ENCODE measurements at regions of chr21 and their contacts with region 1.

Region 1: DNA sequence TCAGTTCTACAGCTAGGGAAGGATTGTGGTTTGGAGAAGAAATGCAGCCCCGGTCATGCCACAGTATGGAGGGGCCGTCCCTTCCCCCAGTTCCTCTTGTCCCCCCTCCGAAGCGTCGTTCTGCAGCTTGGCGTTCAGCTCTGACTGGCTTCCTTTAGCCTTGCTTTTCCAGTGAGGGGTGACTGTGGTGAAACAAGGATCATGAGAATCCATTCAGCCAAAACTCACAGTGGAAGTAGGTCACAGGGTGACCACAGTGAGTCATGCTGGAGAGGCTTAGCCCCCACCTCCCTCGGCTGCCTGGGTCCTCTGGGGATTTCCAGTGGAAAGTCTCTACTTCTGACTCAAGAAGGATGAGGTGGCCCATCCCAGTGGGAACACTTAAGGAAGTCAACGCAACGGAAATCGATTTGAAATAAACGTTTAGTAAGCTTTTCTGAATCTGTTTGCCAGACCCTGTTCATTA is 37.3 kb upstream of the COL6A2 start:
- DNase-seq: peak; percentile 99
- H3K4me3 ChIP-seq: no peak overlapping the region
- H3K27ac ChIP-seq: peak overlapping the region; percentile 98
- H3K27me3 ChIP-seq: no peaks in the 10 kb centered on the region
- CTCF ChIP-seq: no peak

Region 2: DNA sequence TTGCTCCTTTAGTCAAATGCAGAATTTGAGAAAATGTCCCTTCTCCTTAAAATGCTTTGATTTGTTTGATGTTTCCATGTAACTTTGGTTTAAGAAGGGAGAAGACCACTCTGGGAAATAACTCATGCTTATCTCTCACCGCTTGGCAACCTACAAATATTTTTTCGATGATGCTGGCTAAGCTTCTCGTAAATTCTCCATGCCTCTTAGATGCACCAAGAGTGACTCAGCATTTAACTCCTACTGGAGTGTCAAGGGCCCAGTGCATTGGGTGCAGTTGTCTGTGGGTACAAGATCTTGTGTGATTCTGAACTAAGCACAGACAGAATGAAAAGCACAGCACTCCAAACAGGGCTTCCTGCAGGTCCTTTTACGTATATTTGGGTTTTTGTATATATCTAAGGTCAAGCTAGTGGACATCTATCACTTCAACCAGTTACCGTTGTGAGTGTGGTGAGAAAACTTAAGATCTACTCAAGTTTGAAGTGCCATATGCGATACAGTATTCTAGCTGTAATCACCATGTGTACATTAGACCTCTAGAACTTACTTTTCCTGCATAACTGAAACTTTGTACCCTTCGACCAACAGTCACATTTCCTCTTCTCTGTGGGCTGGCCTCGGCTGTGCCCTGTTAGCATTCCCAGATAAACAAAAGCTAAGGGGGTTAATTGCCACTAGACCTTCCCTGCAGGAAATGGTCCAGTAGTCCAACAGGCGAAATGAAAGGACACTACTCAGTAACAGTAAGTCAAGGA is 599.8 kb before region 1 on chr21:
- in situ Hi-C with region 1: no loop called
- DNase-seq: peak; percentile 90
- H3K4me3 ChIP-seq: no peak overlapping the region
- H3K27ac ChIP-seq: peak overlapping the region; percentile 77
- H3K27me3 ChIP-seq: no peaks in the 10 kb centered on the region
- CTCF ChIP-seq: no peak

Region 3: GRCh38 chr21:46002841-46003574 is 57.6 kb before region 1 on chr21:
- in situ Hi-C with region 1: no loop called
- DNase-seq: no peak
- H3K4me3 ChIP-seq: no peak overlapping the region
- H3K27ac ChIP-seq: no peak overlapping the region
- H3K27me3 ChIP-seq: no peaks in the 10 kb centered on the region
- CTCF ChIP-seq: no peak

Region 4: GRCh38 chr21:46022551-46023525 is 37.8 kb before region 1 on chr21:
- in situ Hi-C with region 1: loop called (anchors 5 kb)
- DNase-seq: no peak
- H3K4me3 ChIP-seq: no peak overlapping the region
- H3K27ac ChIP-seq: no peak overlapping the region
- H3K27me3 ChIP-seq: no peaks in the 10 kb centered on the region
- CTCF ChIP-seq: no peak